A673 (cell line): ENCODE measurements at regions of chr19 and their contacts with region 1.

Region 1: GRCh38 chr19:8025316-8025715 is 19.9 kb upstream of the ELAVL1 start:
- DNase-seq: no peak
- H3K4me3 ChIP-seq: no peak overlapping the region
- H3K27ac ChIP-seq: no peak overlapping the region
- H3K4me1 ChIP-seq: no peaks in the 10 kb centered on the region
- H3K27me3 ChIP-seq: no peaks in the 10 kb centered on the region
- CTCF ChIP-seq: no peak

Region 2: DNA sequence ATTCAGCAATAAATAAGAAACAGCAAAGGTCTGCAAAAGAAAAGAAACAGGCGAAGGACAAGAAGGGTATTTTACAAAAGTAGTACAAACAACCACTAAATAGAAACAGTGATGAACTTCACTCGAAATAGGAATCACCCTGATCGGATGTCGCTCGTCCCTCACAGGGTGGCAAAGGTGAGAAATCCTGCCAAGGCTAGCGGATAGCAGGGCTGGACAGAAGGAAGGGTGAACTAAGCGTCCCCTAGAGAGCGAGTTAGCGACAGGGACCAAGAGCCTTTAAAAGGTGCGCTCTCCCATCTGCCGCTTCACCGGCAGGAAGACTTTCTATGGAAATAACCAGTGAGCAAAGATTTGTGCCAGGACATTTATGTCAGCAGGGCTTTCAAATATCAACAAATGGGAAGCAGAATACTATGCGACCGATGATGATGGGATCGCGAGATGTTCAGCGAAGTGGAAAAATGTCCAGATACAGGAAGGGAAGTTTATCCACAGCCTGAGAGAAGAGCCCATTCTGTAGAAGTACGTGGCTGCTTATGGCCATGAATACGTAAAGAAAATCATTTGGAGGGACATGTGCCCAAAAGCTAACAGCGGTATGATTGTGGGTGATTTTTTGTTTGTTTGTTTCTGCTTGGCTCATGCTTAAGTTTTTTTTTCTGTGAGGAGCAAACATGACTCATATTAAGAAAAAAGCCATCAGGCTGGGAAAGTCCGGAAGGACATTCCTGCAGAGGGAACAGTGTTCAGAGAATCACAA is 38.8 kb before region 1 on chr19:
- CTCF ChIA-PET with region 1: no interaction called
- POLR2A ChIA-PET with region 1: no interaction called
- intact Hi-C with region 1: no loop called
- DNase-seq: no peak
- H3K4me3 ChIP-seq: no peak overlapping the region
- H3K27ac ChIP-seq: no peak overlapping the region
- H3K4me1 ChIP-seq: no peaks in the 10 kb centered on the region
- H3K27me3 ChIP-seq: no peaks in the 10 kb centered on the region
- CTCF ChIP-seq: no peak

Region 3: GRCh38 chr19:8050274-8051096 is 25.2 kb after region 1 on chr19:
- CTCF ChIA-PET with region 1: no interaction called
- POLR2A ChIA-PET with region 1: no interaction called
- intact Hi-C with region 1: no loop called
- DNase-seq: peak; percentile 94
- H3K4me3 ChIP-seq: peak overlapping the region; percentile 43
- H3K27ac ChIP-seq: no peak overlapping the region
- H3K4me1 ChIP-seq: no peaks in the 10 kb centered on the region
- H3K27me3 ChIP-seq: no peaks in the 10 kb centered on the region
- CTCF ChIP-seq: no peak

Region 4: DNA sequence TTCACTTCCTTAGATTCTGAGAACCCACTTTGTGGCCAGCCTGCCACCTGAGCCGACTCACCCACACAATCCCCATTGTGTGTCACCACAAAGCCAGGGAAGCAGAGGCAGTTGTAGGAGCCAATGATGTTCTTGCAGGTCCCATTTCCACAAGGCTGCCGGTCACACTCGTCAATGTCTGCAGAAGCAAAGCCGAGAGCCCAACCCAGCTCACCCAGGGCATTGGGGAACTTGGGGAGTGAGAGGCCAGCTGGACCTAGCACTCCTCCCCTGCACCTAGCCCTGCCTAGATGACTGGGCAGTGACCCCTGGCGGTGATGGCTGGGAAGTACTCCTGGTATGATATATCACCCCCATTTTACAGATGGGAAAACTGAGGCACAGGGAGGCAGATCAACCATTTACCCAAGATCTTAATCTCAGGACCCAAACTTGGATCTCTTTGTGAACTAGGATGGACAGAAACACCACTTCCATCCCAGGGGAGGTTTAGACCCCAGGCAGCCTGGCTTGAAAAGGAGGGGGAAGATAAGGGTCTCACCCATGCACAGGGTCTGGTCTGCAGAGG is 70.7 kb after region 1 on chr19:
- CTCF ChIA-PET with region 1: interaction called, 7 read pairs
- POLR2A ChIA-PET with region 1: interaction called, 13 read pairs
- intact Hi-C with region 1: no loop called
- DNase-seq: no peak
- H3K4me3 ChIP-seq: no peak overlapping the region
- H3K27ac ChIP-seq: no peak overlapping the region
- H3K4me1 ChIP-seq: no peaks in the 10 kb centered on the region
- H3K27me3 ChIP-seq: no peaks in the 10 kb centered on the region
- CTCF ChIP-seq: no peak

Region 5: GRCh38 chr19:8304841-8305621 is 279.7 kb after region 1 on chr19:
- CTCF ChIA-PET with region 1: no interaction called
- POLR2A ChIA-PET with region 1: no interaction called
- intact Hi-C with region 1: no loop called
- DNase-seq: peak; percentile 47
- H3K4me3 ChIP-seq: no peak overlapping the region
- H3K27ac ChIP-seq: no peak overlapping the region
- H3K4me1 ChIP-seq: peaks cover 15% of the 10 kb centered on the region
- H3K27me3 ChIP-seq: no peaks in the 10 kb centered on the region
- CTCF ChIP-seq: no peak